Spleen (tissue), 13 donors: ENCODE measurements at regions of chr3 and their contacts with region 1.

Region 1: GRCh38 chr3:137105277-137105977 is 147.6 kb downstream of the IL20RB start:
- DNase-seq: no peak
- H3K4me3 ChIP-seq: no peak overlapping the region
- H3K27ac ChIP-seq: no peak overlapping the region
- H3K4me1 ChIP-seq: peaks cover 0 to 6% (median 0%) of the 10 kb centered on the region in 6 donors
- H3K27me3 ChIP-seq: peaks cover 0 to 37% (median 12%) of the 10 kb centered on the region in 7 donors
- CTCF ChIP-seq: peak in 10 of 11 experiments; percentile 26 to 68 (median 54)
- POLR2A ChIP-seq: no peak

Region 2: GRCh38 chr3:137163241-137163871 is 57.9 kb after region 1 on chr3:
- intact Hi-C with region 1: no loop called
- DNase-seq: no peak
- H3K4me3 ChIP-seq: no peak overlapping the region
- H3K27ac ChIP-seq: no peak overlapping the region
- H3K4me1 ChIP-seq: no peaks in the 10 kb centered on the region
- H3K27me3 ChIP-seq: no peaks in the 10 kb centered on the region
- CTCF ChIP-seq: no peak
- POLR2A ChIP-seq: no peak

Region 3: GRCh38 chr3:137259701-137260100 is 154.3 kb after region 1 on chr3:
- intact Hi-C with region 1: no loop called
- DNase-seq: no peak
- H3K4me3 ChIP-seq: no peak overlapping the region
- H3K27ac ChIP-seq: no peak overlapping the region
- H3K4me1 ChIP-seq: no peaks in the 10 kb centered on the region
- H3K27me3 ChIP-seq: peaks cover 0 to 10% (median 0%) of the 10 kb centered on the region in 7 donors
- CTCF ChIP-seq: no peak
- POLR2A ChIP-seq: no peak

Region 4: GRCh38 chr3:137946345-137946973 is 841.0 kb after region 1 on chr3:
- intact Hi-C with region 1: loop called (anchors 10 kb)
- DNase-seq: no peak
- H3K4me3 ChIP-seq: no peak overlapping the region
- H3K27ac ChIP-seq: no peak overlapping the region
- H3K4me1 ChIP-seq: peaks cover 0 to 4% (median 0%) of the 10 kb centered on the region in 6 donors
- H3K27me3 ChIP-seq: no peaks in the 10 kb centered on the region
- CTCF ChIP-seq: peak in 10 of 11 experiments; percentile 13 to 72 (median 58)
- POLR2A ChIP-seq: no peak

Region 5: GRCh38 chr3:137970914-137971831 is 865.7 kb after region 1 on chr3:
- intact Hi-C with region 1: loop called (anchors 10 kb)
- DNase-seq: peak; percentile 82
- H3K4me3 ChIP-seq: no peak overlapping the region
- H3K27ac ChIP-seq: no peak overlapping the region
- H3K4me1 ChIP-seq: no peaks in the 10 kb centered on the region
- H3K27me3 ChIP-seq: peaks cover 0 to 19% (median 0%) of the 10 kb centered on the region in 7 donors
- CTCF ChIP-seq: peak in 10 of 11 experiments; percentile 22 to 74 (median 59)
- POLR2A ChIP-seq: no peak